Gastrocnemius medialis (tissue), 4 donors: ENCODE measurements at regions of chr17 and their contacts with region 1.

Region 1: DNA sequence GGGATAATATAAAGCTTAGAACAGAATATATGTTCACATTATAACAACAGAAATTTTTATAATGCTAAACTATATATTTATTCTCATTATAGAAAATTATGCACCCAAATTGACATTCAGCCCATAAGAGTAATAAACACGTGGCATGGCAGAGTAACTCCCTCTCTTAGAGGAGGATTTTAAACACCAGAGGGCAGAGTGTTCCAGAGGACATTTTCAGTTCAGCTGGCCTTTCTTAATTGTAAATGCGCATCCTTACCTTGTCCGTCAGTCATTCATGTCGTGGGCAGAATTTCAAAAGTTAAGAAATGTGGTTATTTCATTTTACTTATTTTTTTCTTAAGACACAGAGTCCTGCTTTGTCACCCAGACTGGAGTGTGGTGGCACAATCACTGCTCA is 147.1 kb downstream of the TANC2 start:
- DNase-seq: no peak
- ATAC-seq: no peak
- H3K4me3 ChIP-seq: no peak overlapping the region
- H3K27ac ChIP-seq: no peak overlapping the region
- H3K4me1 ChIP-seq: no peaks in the 10 kb centered on the region
- H3K27me3 ChIP-seq: no peaks in the 10 kb centered on the region
- CTCF ChIP-seq: no peak
- POLR2A ChIP-seq: no peak

Region 2: DNA sequence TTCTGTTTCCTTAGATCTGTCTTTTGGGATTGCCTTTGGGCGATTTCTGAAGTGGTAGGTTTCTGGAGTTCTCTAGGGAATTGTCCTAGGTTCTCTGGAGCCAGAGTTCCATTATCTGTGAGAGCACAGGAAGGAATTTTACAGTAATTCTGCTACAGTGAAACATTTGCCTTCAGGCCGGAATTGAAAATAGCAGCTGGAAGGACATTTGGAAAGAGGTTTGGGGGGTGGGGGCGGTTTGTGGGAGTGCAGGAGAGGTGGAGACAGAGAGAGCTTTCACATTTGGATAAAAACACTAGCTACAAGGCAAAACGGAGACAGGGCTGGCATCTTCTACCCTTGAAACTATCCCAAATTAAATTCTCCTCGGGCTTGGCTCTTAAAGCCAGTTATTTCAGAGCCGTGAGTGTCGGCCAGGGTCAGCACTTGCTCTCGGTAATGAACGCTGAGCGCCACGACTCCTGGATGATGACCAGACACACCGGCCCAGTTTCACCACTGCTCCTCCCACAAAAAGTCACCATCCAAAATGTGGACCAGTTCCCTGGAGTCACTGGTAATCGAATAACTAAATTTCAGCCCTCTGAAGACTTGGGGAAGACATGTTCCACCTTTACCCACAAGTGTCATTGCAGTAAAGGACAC is 214.8 kb before region 1 on chr17:
- in situ Hi-C with region 1: no loop called
- intact Hi-C with region 1: no loop called
- DNase-seq: no peak
- ATAC-seq: no peak
- H3K4me3 ChIP-seq: no peak overlapping the region
- H3K27ac ChIP-seq: no peak overlapping the region
- H3K4me1 ChIP-seq: no peaks in the 10 kb centered on the region
- H3K27me3 ChIP-seq: no peaks in the 10 kb centered on the region
- CTCF ChIP-seq: no peak
- POLR2A ChIP-seq: no peak

Region 3: DNA sequence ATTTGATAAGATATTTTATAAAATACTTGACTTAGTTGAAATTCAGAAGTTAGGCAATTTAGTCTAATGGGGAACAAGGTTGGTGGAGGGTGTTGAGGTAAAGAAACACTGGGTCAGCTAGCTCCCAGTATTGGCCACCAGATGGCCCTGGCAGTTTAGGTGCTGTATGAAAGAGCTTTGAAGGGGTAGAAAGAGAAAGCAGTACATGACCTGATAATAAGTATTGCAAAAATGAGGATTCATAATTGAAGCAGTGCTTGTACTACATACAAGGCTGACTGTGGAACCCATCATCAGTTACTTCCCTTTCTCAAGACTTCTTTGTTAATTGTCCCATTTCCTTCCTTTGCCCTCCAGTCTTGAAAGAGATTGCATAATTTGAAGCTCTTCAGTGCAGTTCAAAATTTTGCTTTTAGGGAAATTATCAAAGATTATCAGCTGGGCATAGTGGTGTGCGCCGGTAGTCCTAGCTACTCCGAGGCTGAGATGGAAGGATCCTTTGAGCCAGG is 117.8 kb before region 1 on chr17:
- in situ Hi-C with region 1: no loop called
- intact Hi-C with region 1: no loop called
- DNase-seq: no peak
- ATAC-seq: no peak
- H3K4me3 ChIP-seq: no peak overlapping the region
- H3K27ac ChIP-seq: no peak overlapping the region
- H3K4me1 ChIP-seq: no peaks in the 10 kb centered on the region
- H3K27me3 ChIP-seq: no peaks in the 10 kb centered on the region
- CTCF ChIP-seq: no peak
- POLR2A ChIP-seq: no peak

Region 4: GRCh38 chr17:63075969-63076368 is 37.2 kb before region 1 on chr17:
- in situ Hi-C with region 1: no loop called
- intact Hi-C with region 1: no loop called
- DNase-seq: no peak
- ATAC-seq: no peak
- H3K4me3 ChIP-seq: no peak overlapping the region
- H3K27ac ChIP-seq: no peak overlapping the region
- H3K4me1 ChIP-seq: no peaks in the 10 kb centered on the region
- H3K27me3 ChIP-seq: no peaks in the 10 kb centered on the region
- CTCF ChIP-seq: no peak
- POLR2A ChIP-seq: no peak

Region 5: GRCh38 chr17:63150994-63151464 is 37.8 kb after region 1 on chr17:
- in situ Hi-C with region 1: no loop called
- intact Hi-C with region 1: no loop called
- DNase-seq: no peak
- ATAC-seq: no peak
- H3K4me3 ChIP-seq: no peak overlapping the region
- H3K27ac ChIP-seq: no peak overlapping the region
- H3K4me1 ChIP-seq: no peaks in the 10 kb centered on the region
- H3K27me3 ChIP-seq: no peaks in the 10 kb centered on the region
- CTCF ChIP-seq: no peak
- POLR2A ChIP-seq: no peak

Region 6: GRCh38 chr17:63222655-63223054 is 109.5 kb after region 1 on chr17:
- in situ Hi-C with region 1: loop called in 1 of 4 experiments (anchors 25 kb)
- intact Hi-C with region 1: no loop called
- DNase-seq: no peak
- ATAC-seq: no peak
- H3K4me3 ChIP-seq: no peak overlapping the region
- H3K27ac ChIP-seq: no peak overlapping the region
- H3K4me1 ChIP-seq: no peaks in the 10 kb centered on the region
- H3K27me3 ChIP-seq: no peaks in the 10 kb centered on the region
- CTCF ChIP-seq: no peak
- POLR2A ChIP-seq: no peak